ENCODE measurements at regions of chr4 and their contacts with region 1.

Region 1: DNA sequence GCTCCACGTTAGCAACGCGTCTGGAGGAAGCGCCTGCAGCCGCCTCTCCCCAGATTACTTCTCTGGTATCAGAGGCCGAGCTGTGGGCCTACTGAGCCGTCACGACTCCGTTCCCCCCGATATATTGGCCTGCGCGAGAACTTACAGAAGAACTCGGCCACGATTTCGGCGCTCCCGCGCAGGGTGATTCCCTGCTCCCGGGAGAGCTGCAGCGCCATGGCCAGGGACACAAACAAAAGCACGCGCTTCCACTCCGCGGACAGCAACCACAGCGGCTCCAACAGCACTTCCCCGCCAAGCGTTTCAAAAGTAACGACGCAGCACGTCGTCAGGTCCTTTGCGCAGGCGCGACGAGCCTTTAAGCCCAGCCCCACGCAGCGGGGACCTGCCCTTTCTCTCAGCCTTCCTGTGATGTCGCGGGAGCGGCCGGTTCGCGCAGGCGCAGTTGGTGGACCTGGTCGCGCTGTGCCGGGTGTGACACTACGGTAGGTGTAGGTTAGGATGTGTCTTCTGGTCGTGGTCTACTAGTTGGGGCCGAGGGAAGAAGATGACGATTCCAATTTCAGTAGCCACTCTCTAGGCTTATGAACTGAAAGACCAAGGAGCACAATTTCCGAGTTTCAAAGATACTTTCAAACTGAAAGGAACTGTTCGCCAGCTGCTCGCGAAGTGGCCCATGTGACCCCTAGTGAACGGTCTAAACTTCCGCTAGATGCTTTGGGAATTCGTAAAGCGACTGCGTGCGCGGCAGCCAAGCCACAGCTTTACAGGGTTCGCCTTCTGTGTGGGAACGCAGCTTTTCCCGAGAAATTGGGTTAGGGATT is at the start of gene MAD2L1:
- DNase-seq: peak; percentile 96 to 100 (median 99)
- ATAC-seq: peak; percentile 89
- H3K4me3 ChIP-seq: peak within 1 kb of the TSS; percentile 53 to 84
- H3K4me3 Mint-ChIP-seq: peak within 1 kb of the TSS; percentile 96
- H3K27ac ChIP-seq: peak within 1 kb of the TSS; percentile 79 to 96
- H3K27ac Mint-ChIP-seq: peak within 1 kb of the TSS; percentile 98
- H3K4me1 ChIP-seq: peaks cover 17% of the 10 kb centered on the region
- H3K4me1 Mint-ChIP-seq: peaks cover 66% of the 10 kb centered on the region
- H3K27me3 ChIP-seq: no peaks in the 10 kb centered on the region
- H3K27me3 Mint-ChIP-seq: no peaks in the 10 kb centered on the region
- CTCF ChIP-seq: no peak
- total RNA-seq, gene MAD2L1: 7.4 to 9.1 TPM

Region 2: DNA sequence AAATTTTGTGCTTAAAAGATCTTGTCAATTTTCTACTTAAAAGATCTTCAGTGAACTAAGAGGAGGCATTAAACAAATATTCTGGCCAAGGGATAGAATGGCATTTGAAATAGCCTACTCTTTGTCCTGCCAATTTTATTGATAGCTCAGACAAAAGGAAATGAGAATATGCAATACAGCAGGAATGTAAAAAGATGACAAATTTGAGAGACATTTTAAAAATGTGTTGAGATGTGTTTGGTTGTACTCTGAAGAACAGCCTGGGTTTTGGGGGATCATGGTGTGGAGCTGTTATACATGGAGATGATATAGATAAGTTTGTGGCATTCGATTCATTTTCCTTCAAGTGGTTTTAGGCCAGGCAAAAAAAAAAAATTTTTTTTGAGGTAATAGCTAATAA is 11.5 kb after region 1 on chr4:
- CTCF ChIA-PET with region 1: no interaction called
- POLR2A ChIA-PET with region 1: no interaction called
- intact Hi-C with region 1: no loop called
- DNase-seq: no peak
- ATAC-seq: no peak
- H3K4me3 ChIP-seq: no peak overlapping the region
- H3K4me3 Mint-ChIP-seq: no peak overlapping the region
- H3K27ac ChIP-seq: no peak overlapping the region
- H3K27ac Mint-ChIP-seq: no peak overlapping the region
- H3K4me1 ChIP-seq: no peaks in the 10 kb centered on the region
- H3K4me1 Mint-ChIP-seq: no peaks in the 10 kb centered on the region
- H3K27me3 ChIP-seq: no peaks in the 10 kb centered on the region
- H3K27me3 Mint-ChIP-seq: peaks cover 3% of the 10 kb centered on the region
- CTCF ChIP-seq: no peak

Region 3: GRCh38 chr4:121050300-121050699 is 983.6 kb after region 1 on chr4:
- CTCF ChIA-PET with region 1: no interaction called
- POLR2A ChIA-PET with region 1: no interaction called
- intact Hi-C with region 1: loop called in 1 of 2 experiments (anchors 5 kb)
- DNase-seq: peak in 2 of 9 experiments; percentile 28 to 50
- ATAC-seq: no peak
- H3K4me3 ChIP-seq: no peak overlapping the region
- H3K4me3 Mint-ChIP-seq: no peak overlapping the region
- H3K27ac ChIP-seq: no peak overlapping the region
- H3K27ac Mint-ChIP-seq: no peak overlapping the region
- H3K4me1 ChIP-seq: no peaks in the 10 kb centered on the region
- H3K4me1 Mint-ChIP-seq: peaks cover 8% of the 10 kb centered on the region
- H3K27me3 ChIP-seq: no peaks in the 10 kb centered on the region
- H3K27me3 Mint-ChIP-seq: peaks cover 2% of the 10 kb centered on the region
- CTCF ChIP-seq: peak; percentile 42

Region 4: GRCh38 chr4:121096629-121097028 is 1029.9 kb after region 1 on chr4:
- CTCF ChIA-PET with region 1: no interaction called
- POLR2A ChIA-PET with region 1: no interaction called
- intact Hi-C with region 1: loop called (anchors 1 to 2 kb)
- DNase-seq: peak in 2 of 9 experiments; percentile 20 to 52
- ATAC-seq: no peak
- H3K4me3 ChIP-seq: no peak overlapping the region
- H3K4me3 Mint-ChIP-seq: no peak overlapping the region
- H3K27ac ChIP-seq: no peak overlapping the region
- H3K27ac Mint-ChIP-seq: no peak overlapping the region
- H3K4me1 ChIP-seq: no peaks in the 10 kb centered on the region
- H3K4me1 Mint-ChIP-seq: peaks cover 2% of the 10 kb centered on the region
- H3K27me3 ChIP-seq: no peaks in the 10 kb centered on the region
- H3K27me3 Mint-ChIP-seq: no peaks in the 10 kb centered on the region
- CTCF ChIP-seq: peak; percentile 77

Region 5: GRCh38 chr4:121252224-121252806 is 1185.6 kb after region 1 on chr4:
- CTCF ChIA-PET with region 1: interaction called, 3 read pairs
- POLR2A ChIA-PET with region 1: no interaction called
- intact Hi-C with region 1: loop called (anchors 2 to 5 kb)
- DNase-seq: peak in 8 of 9 experiments; percentile 30 to 80 (median 62)
- ATAC-seq: no peak
- H3K4me3 ChIP-seq: no peak overlapping the region
- H3K4me3 Mint-ChIP-seq: no peak overlapping the region
- H3K27ac ChIP-seq: peak overlapping the region in 1 of 2 experiments; percentile 95
- H3K27ac Mint-ChIP-seq: peak overlapping the region; percentile 55
- H3K4me1 ChIP-seq: peaks cover 36% of the 10 kb centered on the region
- H3K4me1 Mint-ChIP-seq: peaks cover 59% of the 10 kb centered on the region
- H3K27me3 ChIP-seq: no peaks in the 10 kb centered on the region
- H3K27me3 Mint-ChIP-seq: no peaks in the 10 kb centered on the region
- CTCF ChIP-seq: peak; percentile 85

Region 6: GRCh38 chr4:121726642-121727268 is 1660.0 kb after region 1 on chr4:
- CTCF ChIA-PET with region 1: no interaction called
- POLR2A ChIA-PET with region 1: no interaction called
- intact Hi-C with region 1: loop called in 1 of 2 experiments (anchors 10 kb)
- DNase-seq: peak in 3 of 9 experiments; percentile 4 to 70 (median 59)
- ATAC-seq: peak; percentile 87
- H3K4me3 ChIP-seq: no peak overlapping the region
- H3K4me3 Mint-ChIP-seq: no peak overlapping the region
- H3K27ac ChIP-seq: no peak overlapping the region
- H3K27ac Mint-ChIP-seq: no peak overlapping the region
- H3K4me1 ChIP-seq: no peaks in the 10 kb centered on the region
- H3K4me1 Mint-ChIP-seq: no peaks in the 10 kb centered on the region
- H3K27me3 ChIP-seq: no peaks in the 10 kb centered on the region
- H3K27me3 Mint-ChIP-seq: no peaks in the 10 kb centered on the region
- CTCF ChIP-seq: peak; percentile 49

Region 7: DNA sequence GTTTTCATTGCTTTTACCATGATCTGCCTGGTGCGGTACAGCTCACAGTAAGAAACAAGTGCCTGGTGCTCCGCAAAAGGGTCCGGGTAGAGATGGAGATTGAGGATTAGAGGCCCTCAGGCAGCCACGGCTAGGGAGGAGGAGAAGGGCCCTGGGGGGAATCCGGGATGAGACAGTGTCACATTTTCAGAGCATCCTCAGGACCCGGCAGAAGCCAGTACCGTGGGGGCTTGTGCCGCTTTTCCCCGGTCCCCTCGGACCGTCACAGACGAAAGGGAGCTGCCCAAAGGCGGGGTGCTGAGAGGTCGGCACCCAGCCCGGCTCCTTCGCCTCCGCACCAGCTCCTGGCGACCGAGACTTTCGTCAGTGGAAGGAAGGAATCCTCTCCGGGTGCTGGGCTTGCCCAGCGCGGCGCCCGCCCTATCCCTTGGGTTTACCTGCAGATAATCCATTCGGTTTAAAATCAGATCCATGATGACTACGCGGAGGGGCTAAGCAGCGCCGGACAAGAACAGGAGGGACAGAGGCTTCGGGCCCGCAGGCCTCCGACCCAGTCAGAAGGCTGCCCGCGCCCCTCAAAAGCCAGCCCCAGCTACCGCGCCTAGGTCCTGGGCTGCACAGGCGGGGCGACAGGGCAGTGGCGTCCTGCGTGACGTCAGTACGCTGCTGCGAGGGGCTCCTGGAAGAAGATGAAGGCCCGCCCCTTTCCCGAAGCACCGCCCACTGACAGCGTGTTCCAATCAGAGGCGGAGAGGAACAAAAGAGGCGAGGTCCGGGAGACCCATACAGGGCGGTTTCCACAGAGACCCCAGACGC is 1803.3 kb after region 1 on chr4 and contains the start of gene BBS7:
- CTCF ChIA-PET with region 1: no interaction called
- POLR2A ChIA-PET with region 1: no interaction called
- intact Hi-C with region 1: loop called in 1 of 2 experiments (anchors 1 kb)
- DNase-seq: peak; percentile 91 to 98 (median 96)
- ATAC-seq: peak; percentile 99
- H3K4me3 ChIP-seq: peak within 1 kb of the TSS; percentile 88 to 92
- H3K4me3 Mint-ChIP-seq: peak within 1 kb of the TSS; percentile 97
- H3K27ac ChIP-seq: peak within 1 kb of the TSS; percentile 74 to 79
- H3K27ac Mint-ChIP-seq: peak within 1 kb of the TSS; percentile 92
- H3K4me1 ChIP-seq: peaks cover 6% of the 10 kb centered on the region
- H3K4me1 Mint-ChIP-seq: peaks cover 14% of the 10 kb centered on the region
- H3K27me3 ChIP-seq: no peaks in the 10 kb centered on the region
- H3K27me3 Mint-ChIP-seq: peaks cover 7% of the 10 kb centered on the region
- CTCF ChIP-seq: no peak
- total RNA-seq, gene BBS7: 3.4 to 4.7 TPM